ENCODE measurements at regions of chr3 and their contacts with region 1.

Region 1: GRCh38 chr3:57840473-57840872 is 84.4 kb downstream of the SLMAP start:
- DNase-seq: no peak
- ATAC-seq: no peak

Region 2: GRCh38 chr3:57646723-57647122 is 193.8 kb before region 1 on chr3:
- intact Hi-C with region 1: loop called (anchors 10 kb)
- DNase-seq: no peak
- ATAC-seq: peak; percentile 90